ENCODE measurements at regions of chr1 and their contacts with region 1.

Region 1: DNA sequence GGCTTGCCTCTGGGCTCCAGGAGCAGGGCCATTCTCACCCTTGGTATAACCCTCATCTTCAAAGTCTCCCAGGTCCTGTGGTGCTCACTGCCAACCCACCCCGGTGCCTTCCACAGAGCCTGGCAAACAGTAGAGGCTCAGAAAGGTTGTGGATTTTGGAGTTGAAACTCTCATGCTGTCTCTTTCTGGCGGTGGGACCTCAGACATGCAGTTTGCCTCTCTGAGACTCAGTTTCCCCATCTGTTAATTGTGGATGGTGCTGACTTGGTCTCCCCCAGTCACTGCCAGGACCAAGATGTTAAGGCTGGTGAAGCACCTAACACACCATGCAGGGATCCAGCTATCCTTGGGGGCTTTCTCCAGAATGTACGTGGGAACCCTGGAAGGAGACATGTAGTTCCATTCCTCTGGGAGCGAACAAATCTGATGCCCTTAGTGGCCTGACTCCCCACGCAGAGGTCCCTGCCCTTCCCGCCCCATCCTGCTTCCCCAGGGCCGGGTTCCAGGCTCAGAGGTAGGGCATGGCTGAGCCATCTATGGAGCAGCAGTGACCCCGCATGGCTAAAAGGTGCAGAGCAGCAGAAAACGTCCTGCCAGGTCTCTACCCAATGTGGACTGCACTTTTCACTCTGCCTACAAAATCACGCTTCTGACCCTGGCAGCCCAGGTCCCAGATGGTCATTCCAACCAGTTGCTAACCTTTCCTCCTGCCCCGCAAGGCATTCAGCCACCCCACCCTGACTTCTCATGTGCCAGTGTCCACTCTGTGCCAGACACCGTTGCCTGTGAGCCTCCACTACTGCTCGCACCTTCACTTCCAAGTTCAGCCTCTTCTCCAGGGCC is 9.2 kb upstream of the TTC22 start:
- ATAC-seq: peak; percentile 77 to 99 (median 95)
- H3K4me3 ChIP-seq: no peak overlapping the region
- H3K27ac ChIP-seq: no peak overlapping the region
- H3K4me1 ChIP-seq: peaks cover 0 to 6% of the 10 kb centered on the region in 2 donors

Region 2: GRCh38 chr1:53860967-53861411 is 949.3 kb before region 1 on chr1:
- in situ Hi-C with region 1: loop called in 2 of 9 experiments (anchors 25 kb)
- ATAC-seq: peak in 7 of 8 experiments; percentile 27 to 88 (median 75)
- H3K4me3 ChIP-seq: no peak overlapping the region
- H3K27ac ChIP-seq: no peak overlapping the region
- H3K4me1 ChIP-seq: peaks cover 0 to 7% of the 10 kb centered on the region in 2 donors

Region 3: DNA sequence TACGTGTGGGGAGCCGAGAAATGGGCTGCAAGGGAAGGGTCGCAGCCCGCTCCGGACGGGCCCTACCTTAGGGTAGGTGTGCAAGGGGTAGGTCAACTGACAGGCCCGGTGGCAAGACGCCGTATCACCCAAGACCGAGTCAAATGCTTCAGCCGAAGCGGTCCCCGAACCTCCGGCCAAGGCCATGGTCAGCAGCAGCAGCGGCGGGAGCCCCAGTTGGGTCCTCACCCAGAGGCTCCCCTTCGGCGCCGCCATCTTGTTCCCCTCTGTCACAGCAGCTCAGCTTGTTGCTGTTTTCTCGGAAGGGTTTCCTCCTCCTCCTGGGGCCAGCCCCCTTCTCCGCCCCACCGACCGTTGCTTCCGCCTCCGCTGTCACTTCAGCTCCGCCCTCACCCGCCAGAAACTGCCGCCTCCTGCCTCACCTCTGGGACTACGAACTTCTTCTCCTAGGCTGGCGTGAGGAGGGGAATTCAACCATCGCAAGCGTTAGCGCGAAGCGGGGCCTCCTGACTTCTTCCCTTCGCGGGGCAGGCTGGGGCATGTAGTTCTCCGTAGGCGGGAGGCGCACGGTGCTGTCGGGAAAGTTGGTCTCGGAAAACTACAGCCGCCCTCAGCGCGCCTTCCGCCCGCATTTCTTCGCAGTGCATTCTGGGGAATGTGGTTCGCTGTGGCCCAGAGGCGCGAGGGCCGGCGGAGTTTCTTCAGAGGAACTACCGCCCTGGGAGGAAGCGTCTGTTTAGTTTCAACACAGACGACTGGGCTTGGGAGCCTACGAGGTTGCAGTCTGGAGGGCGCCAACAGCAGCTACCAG is 757.2 kb before region 1 on chr1 and contains the starts of genes TCEANC2 and TMEM59:
- in situ Hi-C with region 1: loop called in 3 of 9 experiments (anchors 25 kb)
- ATAC-seq: peak; percentile 87 to 94 (median 92)
- H3K4me3 ChIP-seq: peak within 1 kb of the TSS; percentile 60 to 89 (median 76)
- H3K27ac ChIP-seq: peak within 1 kb of the TSS; percentile 79 to 90
- H3K4me1 ChIP-seq: peaks cover 7 to 24% of the 10 kb centered on the region in 2 donors
- total RNA-seq, gene TCEANC2: 3.0 to 10.1 (median 7.4) TPM
- total RNA-seq, gene TMEM59: 114 to 406 (median 146) TPM

Region 4: GRCh38 chr1:54499360-54500106 is 310.8 kb before region 1 on chr1:
- in situ Hi-C with region 1: loop called in 1 of 9 experiments (anchors 25 kb)
- ATAC-seq: peak; percentile 88 to 95 (median 93)
- H3K4me3 ChIP-seq: peak overlapping the region; percentile 14 to 33 (median 21)
- H3K27ac ChIP-seq: peak overlapping the region; percentile 1 to 32
- H3K4me1 ChIP-seq: peaks cover 20 to 22% of the 10 kb centered on the region in 2 donors

Region 5: DNA sequence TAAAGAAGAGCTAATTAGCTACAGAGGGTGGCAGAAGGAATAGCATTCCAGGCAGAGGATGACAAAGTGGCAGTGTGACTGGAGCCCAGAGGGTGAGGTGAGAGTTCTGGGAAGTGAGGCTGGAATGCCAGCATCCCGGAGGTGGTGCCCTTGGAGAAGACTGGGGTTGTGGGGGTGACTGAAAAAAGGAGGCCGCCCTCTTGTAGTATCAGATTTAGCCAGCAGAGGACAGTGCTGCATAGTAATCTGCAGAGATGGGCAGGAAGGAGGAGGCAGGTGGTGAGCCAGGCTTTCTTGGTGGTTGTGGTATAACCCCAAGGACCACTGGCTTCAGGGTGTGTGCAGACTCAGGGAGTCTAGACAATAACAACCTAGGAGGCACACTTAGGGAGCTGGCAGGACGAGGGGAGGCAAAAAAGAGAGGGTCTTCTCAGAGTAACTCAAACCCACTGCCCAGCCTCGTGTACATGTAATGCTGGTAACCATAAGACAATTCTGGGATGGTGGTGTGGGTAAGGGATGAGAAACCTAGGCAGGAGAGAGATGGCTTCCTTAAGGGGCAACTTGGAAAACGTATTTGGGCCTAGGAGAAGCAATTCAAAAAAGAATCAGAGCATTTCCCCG is 138.2 kb before region 1 on chr1:
- in situ Hi-C with region 1: loop called in 1 of 9 experiments (anchors 25 kb)
- ATAC-seq: peak; percentile 55 to 94 (median 79)
- H3K4me3 ChIP-seq: no peak overlapping the region
- H3K27ac ChIP-seq: no peak overlapping the region
- H3K4me1 ChIP-seq: peaks cover 3 to 5% of the 10 kb centered on the region in 2 donors

Region 6: GRCh38 chr1:55050283-55050682 is 240.0 kb after region 1 on chr1:
- in situ Hi-C with region 1: no loop called
- ATAC-seq: peak in 5 of 8 experiments; percentile 24 to 93 (median 54)
- H3K4me3 ChIP-seq: no peak overlapping the region
- H3K27ac ChIP-seq: no peak overlapping the region
- H3K4me1 ChIP-seq: peaks cover 0 to 3% of the 10 kb centered on the region in 2 donors